ENCODE measurements at regions of chr3 and their contacts with region 1.

Region 1: GRCh38 chr3:19065027-19065426 is 83.3 kb upstream of the KCNH8 start:
- DNase-seq: peak; percentile 3
- H3K4me3 ChIP-seq: no peak overlapping the region
- H3K27ac ChIP-seq: no peak overlapping the region
- H3K4me1 ChIP-seq: no peaks in the 10 kb centered on the region
- H3K27me3 ChIP-seq: no peaks in the 10 kb centered on the region
- CTCF ChIP-seq: peak; percentile 29; the same call in 1 of the 2 replicates

Region 2: GRCh38 chr3:18946524-18946923 is 118.5 kb before region 1 on chr3:
- CTCF ChIA-PET with region 1: no interaction called
- POLR2A ChIA-PET with region 1: no interaction called
- intact Hi-C with region 1: no loop called
- DNase-seq: no peak
- H3K4me3 ChIP-seq: no peak overlapping the region
- H3K27ac ChIP-seq: no peak overlapping the region
- H3K4me1 ChIP-seq: no peaks in the 10 kb centered on the region
- H3K27me3 ChIP-seq: no peaks in the 10 kb centered on the region
- CTCF ChIP-seq: no peak

Region 3: DNA sequence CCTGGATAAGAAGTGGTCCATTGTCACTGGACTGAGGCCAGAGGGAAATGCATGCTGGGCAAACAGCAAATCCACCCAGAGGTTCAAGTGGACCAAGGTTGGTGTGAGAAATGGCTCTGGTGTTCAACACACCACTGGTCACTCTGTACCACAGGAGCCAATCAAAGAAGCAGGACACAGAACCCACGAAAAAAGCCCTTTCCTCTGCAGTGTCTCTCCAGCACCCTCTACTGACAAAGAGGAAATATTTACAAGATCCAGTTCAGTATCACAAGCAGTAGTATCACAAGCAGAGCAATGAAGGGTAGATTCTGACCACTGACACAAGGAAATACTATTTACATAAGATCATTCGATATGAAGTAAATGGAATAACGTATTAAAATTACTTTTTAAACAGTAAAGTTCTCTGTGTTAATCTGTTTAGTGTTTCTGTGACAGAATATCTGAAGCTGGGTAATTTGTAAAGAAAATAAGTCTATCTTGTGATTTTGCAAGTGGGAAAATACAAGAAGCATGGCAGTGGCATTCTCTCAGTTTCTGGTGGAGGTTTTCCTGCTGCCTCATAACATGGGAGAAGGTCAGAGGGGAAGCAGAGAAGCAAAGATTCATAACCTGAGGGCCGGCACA is 478.3 kb after region 1 on chr3:
- CTCF ChIA-PET with region 1: no interaction called
- POLR2A ChIA-PET with region 1: no interaction called
- intact Hi-C with region 1: loop called (anchors 2 kb)
- DNase-seq: peak; percentile 13
- H3K4me3 ChIP-seq: no peak overlapping the region
- H3K27ac ChIP-seq: no peak overlapping the region
- H3K4me1 ChIP-seq: no peaks in the 10 kb centered on the region
- H3K27me3 ChIP-seq: no peaks in the 10 kb centered on the region
- CTCF ChIP-seq: peak; percentile 53